Mucosa of descending colon (tissue), 3 donors: ENCODE measurements at regions of chr6 and their contacts with region 1.

Region 1: DNA sequence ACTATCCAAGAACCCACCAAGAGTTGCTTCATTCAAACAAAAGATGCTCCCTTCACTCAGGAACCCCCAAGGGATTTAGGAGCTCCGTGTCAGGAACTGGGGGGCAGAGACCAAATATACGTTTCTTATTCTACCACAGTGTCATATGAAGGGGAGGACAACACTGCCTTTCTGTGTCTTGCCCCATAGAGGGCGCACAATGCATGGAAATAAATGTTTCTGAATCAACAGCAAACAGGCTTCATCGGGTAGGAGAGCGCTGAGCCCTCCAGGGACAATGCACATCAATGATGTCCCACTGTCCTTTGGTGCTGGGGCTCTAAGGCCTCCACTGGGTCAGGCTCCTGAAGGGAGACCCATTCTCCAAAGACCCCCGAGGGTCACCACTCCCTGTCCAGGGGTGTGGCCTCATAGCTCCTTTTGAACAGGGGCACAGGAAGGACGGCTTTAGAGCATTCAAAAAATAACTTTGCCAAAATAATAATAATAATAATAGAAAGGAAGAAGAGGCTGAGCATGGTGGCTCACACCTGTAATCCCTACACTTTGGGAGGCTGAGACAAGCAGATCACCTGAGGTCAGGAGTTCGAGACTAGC is 31.1 kb downstream of the PLG start:
- DNase-seq: peak in 1 of 3 donors; percentile 37
- ATAC-seq: peak; percentile 52
- H3K4me3 ChIP-seq: no peak overlapping the region
- H3K4me1 ChIP-seq: no peaks in the 10 kb centered on the region
- CTCF ChIP-seq: peak; percentile 41

Region 2: GRCh38 chr6:161370880-161371279 is 637.7 kb after region 1 on chr6:
- intact Hi-C with region 1: loop called in 1 of 2 experiments (anchors 5 kb)
- DNase-seq: peak in 2 of 3 donors; percentile 60 to 68
- ATAC-seq: peak; percentile 60
- H3K4me3 ChIP-seq: no peak overlapping the region
- H3K4me1 ChIP-seq: peaks cover 4% of the 10 kb centered on the region
- CTCF ChIP-seq: peak; percentile 78